Natural killer cell (primary cell): ENCODE measurements at regions of chr15 and their contacts with region 1.

Region 1: DNA sequence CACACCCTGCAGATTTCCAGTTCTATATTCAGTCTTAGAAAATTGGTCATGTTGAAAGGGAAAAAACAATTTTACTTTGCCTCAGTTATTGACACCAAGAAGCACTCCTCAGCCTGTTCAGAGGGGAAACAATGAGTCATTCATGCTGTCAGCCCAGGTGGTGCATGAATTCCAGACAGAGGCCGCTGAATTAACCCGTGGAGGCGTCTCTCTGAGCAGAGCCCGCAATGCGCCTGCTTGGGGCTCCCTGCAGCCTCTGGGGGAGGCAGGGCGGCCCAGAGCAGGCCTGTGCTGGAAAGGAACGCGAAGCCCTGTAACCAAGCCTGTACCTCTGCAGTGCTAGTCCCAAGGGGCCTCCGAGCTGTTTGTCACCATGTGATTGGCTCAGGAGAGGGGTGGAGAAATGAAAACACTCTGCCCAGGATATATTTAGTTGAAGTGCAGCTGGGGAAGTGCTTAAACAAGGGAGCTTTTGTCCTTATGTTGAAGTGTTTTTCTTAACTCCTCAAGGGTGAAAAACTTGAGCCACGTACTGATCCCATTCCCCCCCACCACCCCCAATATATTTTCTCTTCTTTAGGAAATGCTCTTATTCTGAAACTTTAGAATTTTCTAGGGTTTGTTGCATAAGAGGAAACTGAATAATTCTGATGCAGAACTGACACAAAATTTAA is 68.3 kb upstream of the CHD2 start:
- DNase-seq: peak; percentile 63 to 91
- ATAC-seq: peak; percentile 88 to 94 (median 93)
- H3K4me3 ChIP-seq: peak overlapping the region; percentile 3
- H3K4me3 Mint-ChIP-seq: peak overlapping the region; percentile 77
- H3K27ac ChIP-seq: peak overlapping the region; percentile 86
- H3K27ac Mint-ChIP-seq: peak overlapping the region; percentile 91 to 97
- H3K4me1 ChIP-seq: peaks cover 27% of the 10 kb centered on the region
- H3K4me1 Mint-ChIP-seq: peaks cover 20 to 25% of the 10 kb centered on the region in 2 donors
- H3K27me3 ChIP-seq: no peaks in the 10 kb centered on the region
- H3K27me3 Mint-ChIP-seq: no peaks in the 10 kb centered on the region
- CTCF ChIP-seq: no peak

Region 2: GRCh38 chr15:92763459-92763858 is 68.3 kb before region 1 on chr15:
- intact Hi-C with region 1: no loop called
- DNase-seq: no peak
- ATAC-seq: no peak
- H3K4me3 ChIP-seq: no peak overlapping the region
- H3K4me3 Mint-ChIP-seq: no peak overlapping the region
- H3K27ac ChIP-seq: no peak overlapping the region
- H3K27ac Mint-ChIP-seq: no peak overlapping the region
- H3K4me1 ChIP-seq: no peaks in the 10 kb centered on the region
- H3K4me1 Mint-ChIP-seq: no peaks in the 10 kb centered on the region
- H3K27me3 ChIP-seq: no peaks in the 10 kb centered on the region
- H3K27me3 Mint-ChIP-seq: peaks cover 0 to 7% of the 10 kb centered on the region in 2 donors
- CTCF ChIP-seq: no peak

Region 3: DNA sequence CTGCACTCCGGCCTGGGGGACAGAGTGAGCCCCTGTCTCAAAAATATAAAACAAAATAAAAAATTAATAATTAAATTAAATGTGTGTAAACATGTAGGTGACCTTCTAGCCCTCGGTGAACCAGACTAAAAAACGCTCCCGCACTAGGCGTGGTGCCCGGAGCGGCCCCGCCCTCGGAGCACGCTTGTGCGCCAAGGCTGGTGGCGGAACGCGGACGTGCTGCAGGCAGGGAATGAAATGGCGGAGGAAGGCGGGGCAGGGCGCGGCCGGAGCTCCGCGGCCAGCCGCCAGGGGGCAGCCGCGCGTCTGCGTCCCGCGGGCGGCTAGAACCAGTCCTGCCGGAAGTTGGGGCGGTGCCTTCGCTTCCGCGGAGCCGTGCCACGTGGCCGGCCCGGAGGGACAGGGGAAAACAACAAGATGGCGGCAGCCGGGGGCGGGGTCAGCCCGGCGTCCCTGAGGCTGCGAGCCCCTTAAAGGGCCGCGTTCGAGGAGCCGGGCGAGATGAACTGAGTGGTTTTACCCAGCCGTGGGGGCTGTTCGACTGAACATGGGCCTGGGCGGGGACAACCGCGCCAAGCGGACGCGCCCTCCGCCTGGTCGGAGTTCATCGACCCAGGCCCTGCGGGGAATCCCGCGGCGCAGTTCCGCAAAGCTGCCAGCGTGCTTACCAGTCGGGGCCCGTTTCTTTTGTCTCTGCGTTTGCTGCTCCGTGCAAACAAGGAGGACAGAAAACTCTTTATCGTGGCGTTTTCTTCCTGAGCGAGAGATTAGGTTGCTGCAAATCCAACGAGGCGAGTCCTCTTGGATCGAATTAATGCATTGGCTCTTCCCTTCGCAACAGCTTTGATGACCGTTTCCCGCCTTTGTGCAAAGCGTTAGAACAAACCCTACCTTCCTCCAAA is 22.6 kb before region 1 on chr15:
- intact Hi-C with region 1: loop called (anchors 1 kb)
- DNase-seq: peak; percentile 96 to 99
- ATAC-seq: peak; percentile 83 to 95 (median 88)
- H3K4me3 ChIP-seq: peak overlapping the region; percentile 60
- H3K4me3 Mint-ChIP-seq: peak overlapping the region; percentile 91
- H3K27ac ChIP-seq: peak overlapping the region; percentile 96
- H3K27ac Mint-ChIP-seq: peak overlapping the region; percentile 95 to 96
- H3K4me1 ChIP-seq: peaks cover 24% of the 10 kb centered on the region
- H3K4me1 Mint-ChIP-seq: peaks cover 26 to 27% of the 10 kb centered on the region in 2 donors
- H3K27me3 ChIP-seq: no peaks in the 10 kb centered on the region
- H3K27me3 Mint-ChIP-seq: no peaks in the 10 kb centered on the region
- CTCF ChIP-seq: peak; percentile 97

Region 4: DNA sequence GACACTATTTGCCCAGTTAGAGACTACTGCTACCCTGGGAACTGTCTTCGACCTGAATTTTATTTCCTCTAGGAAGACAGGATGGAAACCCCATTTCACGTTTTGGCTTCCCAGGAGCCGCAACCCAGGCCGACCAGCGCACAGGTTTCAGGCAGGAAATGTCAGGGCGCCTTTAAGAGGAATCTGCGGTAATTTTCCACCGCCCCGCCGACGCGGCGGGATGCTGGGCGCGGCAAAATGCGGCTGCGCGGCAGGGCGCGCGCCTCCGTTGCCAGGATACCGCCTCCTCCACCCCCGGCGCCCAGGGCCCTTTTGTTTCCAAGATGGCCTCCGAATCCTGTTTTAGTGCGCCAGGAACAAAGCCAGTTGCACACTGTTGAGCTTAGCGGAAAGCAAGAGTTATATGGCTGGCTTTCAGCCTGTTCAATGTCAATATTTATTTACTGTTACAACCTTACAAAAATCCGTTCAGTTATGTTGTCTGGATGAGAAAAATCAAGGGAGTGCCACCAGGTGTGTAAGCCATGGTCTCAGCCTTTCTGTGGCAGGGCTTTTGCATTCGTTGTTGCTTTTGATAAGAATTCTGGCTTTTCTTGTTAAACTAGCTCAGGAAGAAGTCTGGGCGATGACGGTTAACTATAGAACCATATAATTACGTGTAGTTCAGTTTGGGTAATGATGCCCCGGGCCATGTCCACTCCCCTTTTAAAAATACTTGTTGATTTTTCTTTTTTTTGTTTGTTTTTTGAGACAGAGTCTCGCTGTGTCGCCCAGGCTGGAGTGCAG is 11.4 kb before region 1 on chr15:
- intact Hi-C with region 1: loop called (anchors 1 kb)
- DNase-seq: peak; percentile 73 to 94
- ATAC-seq: peak; percentile 89 to 98 (median 97)
- H3K4me3 ChIP-seq: peak overlapping the region; percentile 52
- H3K4me3 Mint-ChIP-seq: peak overlapping the region; percentile 89
- H3K27ac ChIP-seq: peak overlapping the region; percentile 67
- H3K27ac Mint-ChIP-seq: peak overlapping the region; percentile 87
- H3K4me1 ChIP-seq: peaks cover 9% of the 10 kb centered on the region
- H3K4me1 Mint-ChIP-seq: peaks cover 11 to 13% of the 10 kb centered on the region in 2 donors
- H3K27me3 ChIP-seq: no peaks in the 10 kb centered on the region
- H3K27me3 Mint-ChIP-seq: no peaks in the 10 kb centered on the region
- CTCF ChIP-seq: no peak

Region 5: GRCh38 chr15:92881802-92882696 is 50.3 kb after region 1 on chr15:
- intact Hi-C with region 1: loop called (anchors 5 kb)
- DNase-seq: peak; percentile 95 to 99
- ATAC-seq: peak; percentile 89 to 97 (median 91)
- H3K4me3 ChIP-seq: peak overlapping the region; percentile 32
- H3K4me3 Mint-ChIP-seq: peak overlapping the region; percentile 87
- H3K27ac ChIP-seq: peak overlapping the region; percentile 86
- H3K27ac Mint-ChIP-seq: peak overlapping the region; percentile 93 to 98
- H3K4me1 ChIP-seq: peaks cover 19% of the 10 kb centered on the region
- H3K4me1 Mint-ChIP-seq: peaks cover 43 to 52% of the 10 kb centered on the region in 2 donors
- H3K27me3 ChIP-seq: no peaks in the 10 kb centered on the region
- H3K27me3 Mint-ChIP-seq: peaks cover 9 to 16% of the 10 kb centered on the region in 2 donors
- CTCF ChIP-seq: no peak

Region 6: DNA sequence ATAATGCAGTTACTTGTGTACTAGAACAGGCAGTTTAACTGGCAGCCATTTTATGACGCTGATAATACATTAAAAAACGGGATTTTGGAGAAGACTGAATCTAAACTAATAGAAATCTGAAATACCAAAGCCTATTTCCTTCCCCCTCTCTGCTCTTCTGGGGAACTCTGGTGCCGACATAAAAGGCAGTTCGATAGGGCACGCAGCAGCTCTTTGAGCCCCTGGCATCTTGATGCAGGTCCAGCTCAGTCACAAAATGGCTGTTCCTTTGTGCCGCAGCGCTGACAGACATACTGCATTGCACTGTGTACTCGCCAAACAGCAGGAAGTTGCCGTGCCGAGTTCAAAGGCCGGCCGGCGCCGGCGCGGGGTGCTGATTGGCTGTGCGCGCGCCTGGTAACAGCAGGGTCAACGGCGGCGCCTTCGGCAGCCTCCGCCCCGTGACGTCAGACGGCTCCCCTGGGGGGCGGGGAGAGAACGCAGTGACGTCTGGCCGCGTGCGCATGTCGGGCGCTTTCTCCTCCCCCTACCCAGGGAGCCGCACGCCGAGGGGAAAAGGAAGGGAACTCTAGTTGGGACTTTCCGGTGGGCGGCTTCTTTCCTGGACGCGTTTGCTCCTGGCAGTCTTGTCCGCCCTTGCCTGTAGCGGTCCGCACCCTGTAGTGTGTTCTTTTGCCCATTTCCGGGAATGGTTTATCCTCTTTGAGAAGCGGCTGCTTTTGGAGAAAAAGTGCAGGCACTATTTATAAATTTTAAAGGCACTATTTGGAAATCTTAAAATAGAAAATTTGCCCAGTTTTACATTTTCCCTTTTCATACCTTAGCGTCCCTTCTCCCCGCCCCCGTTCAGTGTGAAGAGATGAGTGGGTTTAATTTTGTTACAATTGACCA is 72.4 kb after region 1 on chr15:
- intact Hi-C with region 1: loop called (anchors 5 kb)
- DNase-seq: peak; percentile 99
- ATAC-seq: peak; percentile 73 to 95 (median 86)
- H3K4me3 ChIP-seq: peak overlapping the region; percentile 65
- H3K4me3 Mint-ChIP-seq: peak overlapping the region; percentile 93
- H3K27ac ChIP-seq: peak overlapping the region; percentile 99
- H3K27ac Mint-ChIP-seq: peak overlapping the region; percentile 99 to 100
- H3K4me1 ChIP-seq: peaks cover 27% of the 10 kb centered on the region
- H3K4me1 Mint-ChIP-seq: peaks cover 76% of the 10 kb centered on the region in 2 donors
- H3K27me3 ChIP-seq: no peaks in the 10 kb centered on the region
- H3K27me3 Mint-ChIP-seq: no peaks in the 10 kb centered on the region
- CTCF ChIP-seq: no peak